ENCODE measurements at regions of chr16 and their contacts with region 1.

Region 1: GRCh38 chr16:71537643-71538042 is 11.4 kb downstream of the CHST4 start:
- DNase-seq: peak; percentile 54
- H3K4me3 ChIP-seq: no peak overlapping the region
- H3K27ac ChIP-seq: no peak overlapping the region
- H3K4me1 ChIP-seq: no peaks in the 10 kb centered on the region
- H3K27me3 ChIP-seq: no peaks in the 10 kb centered on the region
- CTCF ChIP-seq: peak; percentile 80 to 83

Region 2: DNA sequence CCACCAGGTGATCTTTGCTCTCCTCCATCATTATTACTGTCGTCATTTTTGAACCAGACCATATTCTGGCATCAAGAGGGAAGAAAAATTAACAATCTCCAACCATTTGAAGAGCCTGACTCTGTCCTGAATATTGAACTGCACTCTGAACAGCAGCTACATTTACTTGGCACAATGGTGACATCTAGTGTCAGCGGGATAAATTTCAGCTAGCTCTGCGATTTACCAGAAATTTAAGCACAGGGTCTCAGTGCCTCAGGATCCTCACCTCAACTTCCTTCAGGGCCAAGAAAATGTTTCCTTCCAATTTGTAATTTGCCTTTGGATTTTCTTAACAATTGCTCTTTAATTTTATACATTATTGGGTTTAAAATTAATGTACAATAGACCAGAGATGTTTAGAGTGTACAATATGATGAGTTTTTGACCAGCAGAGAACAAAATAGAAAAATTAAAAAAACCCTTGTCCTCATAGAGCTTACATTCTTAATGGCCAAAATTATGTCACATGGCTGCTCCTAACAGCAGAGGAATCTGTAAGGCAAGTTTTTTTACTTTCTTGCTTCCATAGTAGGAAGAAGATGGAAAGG is 37.8 kb before region 1 on chr16:
- CTCF ChIA-PET with region 1: interaction called, 6 read pairs
- dilution Hi-C with region 1: no loop called
- in situ Hi-C with region 1: no loop called
- intact Hi-C with region 1: loop called (anchors 1 kb)
- DNase-seq: peak; percentile 37
- H3K4me3 ChIP-seq: no peak overlapping the region
- H3K27ac ChIP-seq: no peak overlapping the region
- H3K4me1 ChIP-seq: no peaks in the 10 kb centered on the region
- H3K27me3 ChIP-seq: no peaks in the 10 kb centered on the region
- CTCF ChIP-seq: peak; percentile 72 to 82

Region 3: DNA sequence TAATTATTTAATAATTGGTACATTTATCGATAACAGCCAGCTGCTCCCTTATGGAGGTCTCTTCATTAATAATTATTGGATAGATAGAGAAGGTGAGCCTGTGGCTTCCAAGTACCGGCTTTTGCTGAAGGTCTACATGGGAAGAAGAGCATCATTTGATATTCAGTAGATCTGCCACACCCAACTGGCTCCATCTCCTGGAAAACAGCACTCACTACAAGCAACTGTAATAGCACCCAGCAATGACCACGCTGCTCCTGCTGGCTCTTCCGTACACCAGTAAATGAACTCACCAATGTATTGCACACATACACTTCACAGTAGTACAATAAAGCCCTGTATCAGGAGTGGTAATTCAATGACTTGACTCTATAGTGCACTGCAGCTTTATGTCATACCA is 107.8 kb after region 1 on chr16:
- CTCF ChIA-PET with region 1: no interaction called
- dilution Hi-C with region 1: no loop called
- in situ Hi-C with region 1: no loop called
- intact Hi-C with region 1: loop called (anchors 1 kb)
- DNase-seq: peak; percentile 12
- H3K4me3 ChIP-seq: no peak overlapping the region
- H3K27ac ChIP-seq: no peak overlapping the region
- H3K4me1 ChIP-seq: no peaks in the 10 kb centered on the region
- H3K27me3 ChIP-seq: no peaks in the 10 kb centered on the region
- CTCF ChIP-seq: peak; percentile 48 to 60

Region 4: GRCh38 chr16:71781741-71782140 is 244.1 kb after region 1 on chr16:
- CTCF ChIA-PET with region 1: no interaction called
- dilution Hi-C with region 1: no loop called
- in situ Hi-C with region 1: no loop called
- intact Hi-C with region 1: no loop called
- DNase-seq: peak; percentile 17
- H3K4me3 ChIP-seq: no peak overlapping the region
- H3K27ac ChIP-seq: no peak overlapping the region
- H3K4me1 ChIP-seq: peaks cover 4% of the 10 kb centered on the region
- H3K27me3 ChIP-seq: no peaks in the 10 kb centered on the region
- CTCF ChIP-seq: no peak